Common myeloid progenitor, CD34-positive (primary cell): ENCODE measurements at regions of chr12 and their contacts with region 1.

Region 1: GRCh38 chr12:10364815-10365622 is 24.8 kb downstream of the KLRK1 start:
- DNase-seq: peak; percentile 87 to 94 (median 94)
- H3K4me3 ChIP-seq: peak overlapping the region; percentile 59 to 91 (median 77)
- H3K27ac ChIP-seq: peak overlapping the region; percentile 38 to 83
- H3K4me1 ChIP-seq: peaks cover 20 to 47% (median 33%) of the 10 kb centered on the region in 4 experiments
- H3K27me3 ChIP-seq: no peaks in the 10 kb centered on the region

Region 2: GRCh38 chr12:10235761-10236631 is 129.0 kb before region 1 on chr12:
- CTCF ChIA-PET with region 1: interaction called, 11 read pairs
- POLR2A ChIA-PET with region 1: no interaction called
- DNase-seq: peak; percentile 48 to 71 (median 62)
- H3K4me3 ChIP-seq: no peak overlapping the region
- H3K27ac ChIP-seq: no peak overlapping the region
- H3K4me1 ChIP-seq: peaks cover 0 to 2% (median 1%) of the 10 kb centered on the region in 4 experiments
- H3K27me3 ChIP-seq: no peaks in the 10 kb centered on the region

Region 3: GRCh38 chr12:10331642-10332239 is 33.3 kb before region 1 on chr12:
- CTCF ChIA-PET with region 1: interaction called, 16 read pairs
- POLR2A ChIA-PET with region 1: no interaction called
- DNase-seq: peak; percentile 54 to 70 (median 67)
- H3K4me3 ChIP-seq: no peak overlapping the region
- H3K27ac ChIP-seq: no peak overlapping the region
- H3K4me1 ChIP-seq: no peaks in the 10 kb centered on the region
- H3K27me3 ChIP-seq: no peaks in the 10 kb centered on the region

Region 4: GRCh38 chr12:10540776-10541205 is 175.8 kb after region 1 on chr12:
- CTCF ChIA-PET with region 1: no interaction called
- POLR2A ChIA-PET with region 1: no interaction called
- DNase-seq: peak in 2 of 3 donors; percentile 64 to 79
- H3K4me3 ChIP-seq: no peak overlapping the region
- H3K27ac ChIP-seq: no peak overlapping the region
- H3K4me1 ChIP-seq: peaks cover 0 to 7% (median 0%) of the 10 kb centered on the region in 4 experiments
- H3K27me3 ChIP-seq: no peaks in the 10 kb centered on the region

Region 5: GRCh38 chr12:10562306-10562933 is 197.4 kb after region 1 on chr12:
- CTCF ChIA-PET with region 1: interaction called, 14 read pairs
- POLR2A ChIA-PET with region 1: no interaction called
- DNase-seq: peak; percentile 66 to 78 (median 68)
- H3K4me3 ChIP-seq: no peak overlapping the region
- H3K27ac ChIP-seq: no peak overlapping the region
- H3K4me1 ChIP-seq: peaks cover 12 to 28% (median 21%) of the 10 kb centered on the region in 4 experiments
- H3K27me3 ChIP-seq: no peaks in the 10 kb centered on the region